Panc1 (cell line): ENCODE measurements at regions of chr4 and their contacts with region 1.

Region 1: GRCh38 chr4:108738003-108738706 is 24.7 kb downstream of the ETNPPL start:
- DNase-seq: no peak
- ATAC-seq: no peak
- H3K4me3 ChIP-seq: no peak overlapping the region
- H3K27ac ChIP-seq: no peak overlapping the region
- H3K4me1 ChIP-seq: no peaks in the 10 kb centered on the region
- H3K27me3 ChIP-seq: no peaks in the 10 kb centered on the region
- CTCF ChIP-seq: no peak

Region 2: GRCh38 chr4:108940149-108940548 is 202.0 kb after region 1 on chr4:
- CTCF ChIA-PET with region 1: interaction called, 12 read pairs
- POLR2A ChIA-PET with region 1: no interaction called
- in situ Hi-C with region 1: no loop called
- intact Hi-C with region 1: no loop called
- DNase-seq: no peak
- ATAC-seq: no peak
- H3K4me3 ChIP-seq: no peak overlapping the region
- H3K27ac ChIP-seq: no peak overlapping the region
- H3K4me1 ChIP-seq: no peaks in the 10 kb centered on the region
- H3K27me3 ChIP-seq: no peaks in the 10 kb centered on the region
- CTCF ChIP-seq: no peak